Left ventricle myocardium inferior (tissue), 1 donor: ENCODE measurements at regions of chr19 and their contacts with region 1.

Region 1: DNA sequence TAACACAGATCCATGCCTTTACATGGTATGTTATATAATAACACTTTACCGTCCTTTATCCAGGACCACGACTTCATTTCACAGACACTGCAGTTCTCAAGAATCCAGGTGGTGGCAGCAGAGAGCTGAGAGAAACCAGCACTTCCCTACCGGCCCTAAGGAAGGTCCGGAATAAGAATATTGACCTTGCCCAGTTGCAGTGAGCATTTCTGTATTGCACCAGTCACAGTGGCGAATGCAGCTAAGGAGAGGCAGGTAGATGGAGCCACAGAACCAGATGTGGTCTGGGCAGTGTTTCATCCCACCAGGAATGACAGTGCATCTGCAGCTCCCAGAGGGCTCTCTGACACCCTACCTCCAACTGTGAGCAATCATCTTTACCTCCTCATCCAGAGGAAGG is 44.6 kb downstream of the ZNF787 start:
- DNase-seq: no peak
- H3K4me3 ChIP-seq: no peak overlapping the region
- H3K27ac ChIP-seq: no peak overlapping the region
- H3K4me1 ChIP-seq: peaks cover 10% of the 10 kb centered on the region
- H3K27me3 ChIP-seq: peaks cover 5% of the 10 kb centered on the region
- CTCF ChIP-seq: peak; percentile 93

Region 2: GRCh38 chr19:56170261-56170660 is 93.8 kb after region 1 on chr19:
- intact Hi-C with region 1: loop called (anchors 5 kb)
- DNase-seq: no peak
- H3K4me3 ChIP-seq: no peak overlapping the region
- H3K27ac ChIP-seq: peak overlapping the region; percentile 28
- H3K4me1 ChIP-seq: peaks cover 17% of the 10 kb centered on the region
- H3K27me3 ChIP-seq: peaks cover 30% of the 10 kb centered on the region
- CTCF ChIP-seq: no peak